ENCODE measurements at regions of chr17 and their contacts with region 1.

Region 1: GRCh38 chr17:50541716-50542688 is 5.0 kb upstream of the SPATA20 start:
- DNase-seq: peak; percentile 97

Region 2: GRCh38 chr17:49952209-49952911 is 589.6 kb before region 1 on chr17:
- intact Hi-C with region 1: no loop called
- DNase-seq: no peak

Region 3: GRCh38 chr17:50507871-50508572 is 34.0 kb before region 1 on chr17 and contains the start of gene MYCBPAP:
- intact Hi-C with region 1: loop called (anchors 5 kb)
- DNase-seq: peak; percentile 89
- total RNA-seq, gene MYCBPAP: 0.13 TPM

Measured in cardiac septum (tissue), 1 donor.